ENCODE measurements at regions of chr2 and their contacts with region 1.

Region 1: DNA sequence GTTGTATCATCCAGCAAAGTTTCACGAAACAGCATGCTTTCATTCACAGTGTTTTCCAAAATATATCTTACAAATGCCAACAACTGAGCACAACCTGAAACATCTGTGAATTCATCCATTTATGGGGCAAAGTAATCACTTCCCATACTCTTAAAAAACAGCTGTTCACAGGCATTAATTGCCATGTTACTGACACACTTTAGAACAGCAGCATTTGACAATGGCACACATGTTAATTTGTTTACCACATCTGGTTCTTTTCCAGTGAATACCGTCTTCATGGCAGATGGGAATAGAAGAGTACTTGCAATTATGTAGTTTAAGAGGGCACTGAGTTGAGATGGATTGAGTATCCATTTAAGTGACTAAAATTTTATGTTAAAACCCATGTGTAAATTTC is 347.4 kb upstream of the LRP1B start:
- DNase-seq: no peak
- H3K4me3 ChIP-seq: no peak overlapping the region
- H3K27ac ChIP-seq: no peak overlapping the region
- H3K4me1 ChIP-seq: no peaks in the 10 kb centered on the region
- H3K27me3 ChIP-seq: no peaks in the 10 kb centered on the region
- CTCF ChIP-seq: no peak

Region 2: DNA sequence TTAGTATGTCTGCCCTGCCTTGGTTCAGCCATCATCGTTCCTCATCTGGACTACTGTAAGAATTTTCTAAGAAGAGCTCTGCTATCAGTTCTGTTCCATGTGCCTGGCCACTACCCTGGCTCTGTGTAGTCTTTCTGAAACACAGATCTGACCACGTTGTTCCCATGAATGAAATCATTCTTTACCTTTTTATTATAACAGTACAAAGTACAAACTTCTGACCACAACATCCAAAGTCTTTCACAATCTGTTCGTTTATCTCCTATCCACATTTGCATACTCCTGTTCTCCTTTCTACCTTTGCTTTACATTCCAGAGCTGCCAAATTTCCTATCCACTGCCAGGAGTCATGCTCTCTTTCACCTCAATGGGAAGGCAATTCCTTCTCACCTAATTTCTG is 62.7 kb before region 1 on chr2:
- CTCF ChIA-PET with region 1: no interaction called
- POLR2A ChIA-PET with region 1: interaction called, 19 read pairs
- intact Hi-C with region 1: no loop called
- DNase-seq: no peak
- H3K4me3 ChIP-seq: no peak overlapping the region
- H3K27ac ChIP-seq: no peak overlapping the region
- H3K4me1 ChIP-seq: no peaks in the 10 kb centered on the region
- H3K27me3 ChIP-seq: no peaks in the 10 kb centered on the region
- CTCF ChIP-seq: no peak